H1 (cell line): ENCODE measurements at regions of chr21 and their contacts with region 1.

Region 1: DNA sequence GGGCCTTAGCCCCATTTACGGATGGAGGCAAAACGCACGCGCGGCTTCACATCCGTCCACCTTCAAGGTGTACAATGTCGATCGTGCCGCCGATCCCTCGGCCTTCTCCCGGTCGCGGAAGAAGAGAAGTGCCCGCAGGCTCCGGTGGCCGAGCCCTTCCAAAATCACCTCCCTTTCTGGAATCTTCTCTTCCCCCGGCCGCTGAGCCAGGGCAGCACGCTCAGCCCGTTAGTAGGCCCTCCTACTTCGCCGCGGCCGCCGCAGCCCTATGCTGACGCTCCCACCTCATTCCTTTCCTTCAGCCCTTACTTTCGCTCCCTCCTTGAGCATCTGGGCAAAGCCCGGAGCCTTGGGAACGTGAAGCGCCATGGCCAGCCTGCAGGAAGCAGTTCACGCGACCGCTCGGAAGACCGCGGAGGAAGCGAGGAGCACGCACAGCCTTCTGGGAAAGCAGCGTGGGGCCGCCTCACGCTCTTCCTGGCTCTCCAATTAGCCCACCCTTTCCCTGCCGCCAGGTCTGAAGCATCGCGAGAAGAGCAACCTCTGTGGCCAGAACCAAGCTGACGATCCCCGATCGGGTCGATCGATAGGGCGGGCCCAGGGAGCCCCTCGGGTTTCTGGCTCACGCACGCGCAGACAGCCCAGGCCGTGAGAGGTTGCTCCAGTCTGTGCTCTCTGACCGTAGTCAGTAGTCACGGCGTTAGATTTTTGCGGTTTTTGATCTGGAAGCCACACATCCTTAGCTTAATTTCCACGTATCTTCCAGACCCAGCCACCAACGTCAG is at the start of gene CCT8:
- DNase-seq: peak; percentile 94 to 96
- H3K4me3 ChIP-seq: peak within 1 kb of the TSS; percentile 77 to 97 (median 88)
- H3K27ac ChIP-seq: peak within 1 kb of the TSS; percentile 84
- H3K4me1 ChIP-seq: peaks cover 0 to 5% (median 0%) of the 10 kb centered on the region in 4 experiments; a peak in 2 of 7 replicates
- H3K27me3 ChIP-seq: no peaks in the 10 kb centered on the region
- CTCF ChIP-seq: no peak
- EP300 ChIP-seq: no peak
- POLR2A ChIP-seq: peak; percentile 95 to 98
- RAD21 ChIP-seq: no peak
- total RNA-seq, gene CCT8: 314 and 319 TPM in 2 replicates

Region 2: GRCh38 chr21:29056005-29056404 is 17.4 kb before region 1 on chr21:
- CTCF ChIA-PET with region 1: interaction called, 5 read pairs
- POLR2A ChIA-PET with region 1: interaction called, 37 read pairs
- DNase-seq: no peak
- H3K4me3 ChIP-seq: no peak overlapping the region
- H3K27ac ChIP-seq: no peak overlapping the region
- H3K4me1 ChIP-seq: no peaks in the 10 kb centered on the region
- H3K27me3 ChIP-seq: no peaks in the 10 kb centered on the region
- CTCF ChIP-seq: no peak
- EP300 ChIP-seq: no peak
- POLR2A ChIP-seq: no peak
- RAD21 ChIP-seq: no peak